ENCODE measurements at regions of chr2 and their contacts with region 1.

Region 1: DNA sequence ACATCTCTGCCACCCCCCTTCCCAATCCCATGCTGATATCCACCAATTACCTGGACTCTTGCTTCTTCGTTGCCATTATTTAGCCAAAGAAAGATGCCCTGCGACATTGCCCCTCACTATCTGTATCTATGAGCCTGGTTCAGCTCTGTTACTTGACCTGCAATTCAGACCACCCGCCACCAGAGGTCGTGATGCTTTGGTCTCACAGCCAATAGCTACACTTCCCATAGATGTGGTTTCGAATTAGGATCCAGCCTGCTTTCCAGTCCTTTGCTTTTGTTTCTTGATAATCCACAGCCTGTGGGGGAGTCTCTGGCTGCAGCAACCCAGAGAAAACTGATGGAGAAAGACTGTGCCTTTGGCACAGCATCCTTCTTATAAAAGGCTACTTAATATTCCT is 239.4 kb downstream of the KLHL29 start:
- DNase-seq: peak in 1 of 2 experiments; percentile 84
- H3K4me3 ChIP-seq: no peak overlapping the region
- H3K27ac ChIP-seq: no peak overlapping the region
- H3K4me1 ChIP-seq: peaks cover 0 to 6% (median 0%) of the 10 kb centered on the region in 4 experiments; a peak in 1 of 7 replicates
- H3K27me3 ChIP-seq: no peaks in the 10 kb centered on the region; a peak in 1 of 7 replicates
- CTCF ChIP-seq: peak; percentile 50 to 87 (median 60)
- EP300 ChIP-seq: no peak
- POLR2A ChIP-seq: no peak
- RAD21 ChIP-seq: peak; percentile 38 to 61; a peak in 3 of 4 replicates

Region 2: GRCh38 chr2:23426263-23426905 is 198.0 kb before region 1 on chr2:
- CTCF ChIA-PET with region 1: no interaction called
- POLR2A ChIA-PET with region 1: no interaction called
- DNase-seq: peak in 1 of 2 experiments; percentile 41
- H3K4me3 ChIP-seq: no peak overlapping the region
- H3K27ac ChIP-seq: no peak overlapping the region
- H3K4me1 ChIP-seq: peaks cover 0 to 17% (median 10%) of the 10 kb centered on the region in 4 experiments; a peak in 6 of 7 replicates
- H3K27me3 ChIP-seq: no peaks in the 10 kb centered on the region
- CTCF ChIP-seq: no peak
- EP300 ChIP-seq: no peak
- POLR2A ChIP-seq: no peak
- RAD21 ChIP-seq: no peak

Region 3: DNA sequence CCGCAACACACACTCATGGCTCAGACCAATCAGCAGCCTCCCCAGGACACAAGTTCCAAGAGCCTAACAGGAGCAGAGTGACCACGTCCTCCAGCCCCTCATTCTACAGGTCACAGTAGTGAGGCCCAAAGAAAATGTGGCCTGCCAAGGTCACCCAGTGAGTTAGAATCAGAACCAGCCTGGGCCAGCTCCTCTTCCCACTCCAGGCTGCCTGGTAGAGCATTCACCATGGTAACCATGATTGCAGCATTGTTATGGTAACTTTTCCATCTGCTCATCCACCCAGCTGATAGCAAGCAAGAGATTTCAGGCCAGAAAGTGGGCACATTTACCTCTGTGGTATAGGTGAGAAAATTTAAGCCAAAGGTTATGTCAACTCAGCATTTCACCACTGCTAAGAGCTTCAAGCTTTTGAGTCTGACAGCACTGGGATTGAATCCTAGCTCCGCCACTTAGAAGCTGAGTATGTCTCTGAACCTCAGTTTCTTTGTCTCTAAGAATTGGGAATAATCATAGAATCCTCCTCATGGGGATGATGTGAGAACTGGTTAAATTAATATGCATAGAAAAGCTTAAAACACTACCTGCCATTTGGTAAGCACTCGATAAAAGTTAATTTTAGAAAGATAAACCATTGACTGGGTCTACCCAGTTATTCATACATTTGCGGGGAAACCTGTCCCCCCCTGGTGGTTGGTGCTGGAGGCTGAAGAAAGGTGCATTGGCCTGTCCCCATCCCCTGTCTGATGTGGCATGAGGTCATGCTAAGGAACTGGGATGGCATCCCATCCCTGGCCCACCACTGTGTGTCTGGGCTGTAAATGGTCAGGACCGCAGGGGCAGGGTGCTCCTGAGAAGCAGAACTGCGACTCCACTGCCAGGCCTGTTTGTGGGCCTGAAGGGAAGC is 57.9 kb before region 1 on chr2:
- CTCF ChIA-PET with region 1: interaction called, 13 read pairs
- POLR2A ChIA-PET with region 1: no interaction called
- DNase-seq: peak; percentile 31 to 80
- H3K4me3 ChIP-seq: no peak overlapping the region
- H3K27ac ChIP-seq: no peak overlapping the region
- H3K4me1 ChIP-seq: peaks cover 0 to 10% (median 8%) of the 10 kb centered on the region in 4 experiments; a peak in 4 of 7 replicates
- H3K27me3 ChIP-seq: no peaks in the 10 kb centered on the region
- CTCF ChIP-seq: peak; percentile 52 to 88 (median 82)
- EP300 ChIP-seq: no peak
- POLR2A ChIP-seq: no peak
- RAD21 ChIP-seq: peak; percentile 61 to 71

Region 4: GRCh38 chr2:23595601-23596251 is 28.7 kb before region 1 on chr2:
- CTCF ChIA-PET with region 1: interaction called, 10 read pairs
- POLR2A ChIA-PET with region 1: no interaction called
- DNase-seq: no peak
- H3K4me3 ChIP-seq: no peak overlapping the region
- H3K27ac ChIP-seq: no peak overlapping the region
- H3K4me1 ChIP-seq: peaks cover 0 to 4% (median under 1%) of the 10 kb centered on the region in 4 experiments; a peak in 3 of 7 replicates
- H3K27me3 ChIP-seq: no peaks in the 10 kb centered on the region
- CTCF ChIP-seq: peak in 1 of 3 experiments; percentile 22; a peak in 1 of 4 replicates
- EP300 ChIP-seq: no peak
- POLR2A ChIP-seq: no peak
- RAD21 ChIP-seq: no peak

Region 5: GRCh38 chr2:23636426-23636825 is 12.0 kb after region 1 on chr2:
- CTCF ChIA-PET with region 1: interaction called, 148 read pairs
- POLR2A ChIA-PET with region 1: no interaction called
- DNase-seq: no peak
- H3K4me3 ChIP-seq: no peak overlapping the region
- H3K27ac ChIP-seq: no peak overlapping the region
- H3K4me1 ChIP-seq: no peaks in the 10 kb centered on the region; a peak in 1 of 7 replicates
- H3K27me3 ChIP-seq: no peaks in the 10 kb centered on the region
- CTCF ChIP-seq: peak; percentile 49 to 55 (median 50)
- EP300 ChIP-seq: no peak
- POLR2A ChIP-seq: no peak
- RAD21 ChIP-seq: peak; percentile 46 to 64

Region 6: DNA sequence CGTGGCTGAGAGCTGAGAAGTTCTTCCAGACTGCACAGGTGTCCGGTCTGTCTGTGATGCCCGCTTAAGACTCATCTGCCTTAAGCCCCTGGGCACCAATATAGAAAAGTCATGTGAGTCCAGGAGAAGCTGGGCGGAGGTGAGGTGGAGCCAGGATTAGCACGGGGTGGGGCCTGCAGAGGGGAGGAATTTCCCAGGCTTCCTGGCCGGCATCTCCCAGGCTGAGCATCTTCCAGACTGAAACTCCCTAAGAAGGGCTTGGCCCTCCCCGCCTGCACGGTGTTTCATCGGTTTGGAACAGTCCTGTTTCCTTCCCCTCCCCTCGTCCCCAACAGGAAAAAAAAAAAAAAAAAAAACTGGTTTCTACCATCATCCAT is 32.2 kb after region 1 on chr2:
- CTCF ChIA-PET with region 1: interaction called, 35 read pairs
- POLR2A ChIA-PET with region 1: interaction called, 4 read pairs
- DNase-seq: no peak
- H3K4me3 ChIP-seq: no peak overlapping the region
- H3K27ac ChIP-seq: no peak overlapping the region
- H3K4me1 ChIP-seq: no peaks in the 10 kb centered on the region; a peak in 1 of 7 replicates
- H3K27me3 ChIP-seq: no peaks in the 10 kb centered on the region
- CTCF ChIP-seq: no peak
- EP300 ChIP-seq: no peak
- POLR2A ChIP-seq: no peak
- RAD21 ChIP-seq: no peak

Region 7: GRCh38 chr2:23673082-23673481 is 48.7 kb after region 1 on chr2:
- CTCF ChIA-PET with region 1: interaction called, 11 read pairs
- POLR2A ChIA-PET with region 1: no interaction called
- DNase-seq: no peak
- H3K4me3 ChIP-seq: no peak overlapping the region
- H3K27ac ChIP-seq: no peak overlapping the region
- H3K4me1 ChIP-seq: peaks cover 0 to 6% (median 2%) of the 10 kb centered on the region in 4 experiments; a peak in 2 of 7 replicates
- H3K27me3 ChIP-seq: no peaks in the 10 kb centered on the region; a peak in 1 of 7 replicates
- CTCF ChIP-seq: no peak
- EP300 ChIP-seq: no peak
- POLR2A ChIP-seq: no peak
- RAD21 ChIP-seq: no peak